ENCODE measurements at regions of chr18 and their contacts with region 1.

Region 1: DNA sequence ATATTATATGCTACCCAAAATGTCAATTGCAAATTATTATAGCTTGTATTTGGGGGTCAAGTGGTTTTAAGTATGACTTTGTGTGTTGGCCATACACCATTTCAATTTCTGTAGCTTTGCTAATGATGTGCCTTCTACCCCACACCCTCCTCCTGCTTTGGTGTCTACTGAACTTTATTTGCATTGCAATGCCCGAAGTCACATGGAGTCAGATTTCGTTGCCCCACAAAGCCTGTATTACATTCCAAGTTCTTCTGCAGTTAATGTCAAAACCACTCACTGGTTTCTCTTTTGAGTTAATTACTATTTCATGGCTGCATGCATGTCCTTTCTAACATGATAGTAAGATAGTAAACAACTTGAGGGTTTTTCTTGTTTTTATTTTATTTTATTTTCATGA is 528.9 kb downstream of the RIT2 start:
- DNase-seq: no peak
- H3K4me3 ChIP-seq: no peak overlapping the region
- H3K27ac ChIP-seq: no peak overlapping the region
- H3K4me1 ChIP-seq: no peaks in the 10 kb centered on the region
- CTCF ChIP-seq: no peak

Region 2: DNA sequence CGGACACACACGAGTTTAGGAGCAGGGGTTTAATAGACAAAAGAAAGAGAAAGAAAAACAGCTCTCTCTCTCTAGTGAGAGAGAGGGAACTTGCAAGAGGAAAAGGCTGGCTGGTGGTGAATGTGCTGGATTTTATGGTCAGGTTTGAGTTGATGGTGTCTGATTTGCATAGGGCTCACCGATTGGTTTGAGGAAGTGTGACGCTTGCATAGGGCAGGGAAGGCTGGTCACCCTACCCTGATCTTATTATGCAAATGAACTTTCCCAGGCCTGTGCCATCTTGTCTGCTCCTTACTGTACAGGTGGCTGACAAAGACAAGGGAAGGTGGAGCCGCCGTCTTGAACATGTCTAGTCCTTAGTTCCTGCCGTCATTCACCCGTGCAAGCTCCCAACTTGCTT is 120.0 kb after region 1 on chr18:
- CTCF ChIA-PET with region 1: no interaction called
- POLR2A ChIA-PET with region 1: no interaction called
- intact Hi-C with region 1: no loop called
- DNase-seq: no peak
- H3K4me3 ChIP-seq: no peak overlapping the region
- H3K27ac ChIP-seq: no peak overlapping the region
- H3K4me1 ChIP-seq: no peaks in the 10 kb centered on the region
- CTCF ChIP-seq: no peak

Region 3: GRCh38 chr18:43271593-43272432 is 685.2 kb after region 1 on chr18:
- CTCF ChIA-PET with region 1: no interaction called
- POLR2A ChIA-PET with region 1: no interaction called
- intact Hi-C with region 1: loop called (anchors 10 kb)
- DNase-seq: peak; percentile 16
- H3K4me3 ChIP-seq: no peak overlapping the region
- H3K27ac ChIP-seq: no peak overlapping the region
- H3K4me1 ChIP-seq: no peaks in the 10 kb centered on the region
- CTCF ChIP-seq: peak; percentile 70

Measured in OCI-LY7 (cell line).